PC-9 (cell line): ENCODE measurements at regions of chr3 and their contacts with region 1.

Region 1: DNA sequence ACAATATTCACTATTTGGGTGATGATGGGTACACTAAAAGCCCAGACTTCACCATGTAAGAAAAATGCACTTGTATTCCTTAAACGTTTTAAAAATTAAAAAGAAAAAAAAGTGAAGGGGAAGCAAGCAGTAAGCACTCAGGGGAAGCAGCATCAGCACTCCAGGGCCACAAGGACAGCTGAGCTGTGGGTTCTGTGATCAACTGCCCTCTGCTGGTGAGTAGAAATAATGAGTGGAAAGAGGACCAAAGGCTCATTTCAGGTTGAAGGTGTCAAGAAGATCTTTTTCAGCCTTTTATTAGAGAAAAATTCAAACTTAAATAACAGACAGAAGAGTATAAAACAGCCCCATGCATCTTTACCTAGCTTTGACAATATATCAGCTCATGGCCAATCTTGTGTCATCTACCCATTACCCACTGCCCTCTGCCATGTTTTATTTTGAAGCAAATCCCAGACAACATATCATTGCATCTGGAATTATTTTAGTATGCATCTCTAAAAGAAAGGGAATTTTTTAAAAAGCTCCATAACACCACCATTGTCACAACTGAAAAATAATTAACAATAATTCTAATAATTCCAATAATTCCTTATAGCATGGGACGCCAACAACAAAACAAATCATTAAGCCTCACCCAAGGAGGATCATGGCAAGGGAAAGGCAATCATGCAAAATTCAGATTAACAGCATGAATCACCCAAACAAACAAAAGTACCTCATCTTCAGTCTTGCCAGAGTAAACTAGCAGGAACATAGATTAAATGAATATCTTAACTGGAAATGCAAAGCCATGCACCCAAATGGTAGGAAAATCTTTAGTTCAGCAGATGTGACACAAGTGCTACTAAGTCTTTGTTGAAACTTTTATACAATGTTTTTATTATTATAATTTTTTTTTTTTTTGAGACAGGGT is 42.5 kb downstream of the TAMM41 start:
- DNase-seq: peak; percentile 15 to 44
- H3K4me3 ChIP-seq: no peak overlapping the region
- H3K27ac ChIP-seq: no peak overlapping the region
- H3K4me1 ChIP-seq: peaks cover 2% of the 10 kb centered on the region; the same call in 1 of the 2 replicates
- H3K27me3 ChIP-seq: no peaks in the 10 kb centered on the region
- CTCF ChIP-seq: peak; percentile 84

Region 2: GRCh38 chr3:11651900-11652299 is 152.3 kb before region 1 on chr3:
- CTCF ChIA-PET with region 1: no interaction called
- POLR2A ChIA-PET with region 1: no interaction called
- intact Hi-C with region 1: loop called (anchors 1 kb)
- DNase-seq: no peak
- H3K4me3 ChIP-seq: no peak overlapping the region
- H3K27ac ChIP-seq: no peak overlapping the region
- H3K4me1 ChIP-seq: no peaks in the 10 kb centered on the region
- H3K27me3 ChIP-seq: no peaks in the 10 kb centered on the region
- CTCF ChIP-seq: peak; percentile 80